GM12878 (cell line): ENCODE measurements at regions of chr7 and their contacts with region 1.

Region 1: DNA sequence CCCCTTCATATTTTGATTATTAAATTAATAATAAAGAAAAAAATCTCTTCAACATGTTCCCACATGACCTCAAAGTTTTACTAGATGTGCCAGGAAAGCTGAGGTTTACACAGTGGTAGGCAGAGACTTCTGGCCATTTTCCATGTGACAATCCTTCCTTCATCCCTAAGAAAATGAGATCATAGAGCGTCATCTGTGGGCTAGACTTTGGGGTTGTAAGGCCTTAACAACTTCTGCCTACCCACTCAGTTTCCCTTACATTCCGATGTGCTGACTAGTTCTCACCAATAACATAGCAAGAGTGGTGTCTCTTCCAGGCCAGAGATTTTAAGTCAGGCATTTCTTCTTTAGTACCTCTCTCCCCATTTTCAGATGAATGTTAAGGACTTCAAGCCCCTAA is 171.1 kb upstream of the PHF14 start:
- DNase-seq: no peak
- ATAC-seq: no peak
- H3K4me3 ChIP-seq: no peak overlapping the region
- H3K27ac ChIP-seq: no peak overlapping the region
- H3K4me1 ChIP-seq: no peaks in the 10 kb centered on the region
- H3K27me3 ChIP-seq: no peaks in the 10 kb centered on the region
- CTCF ChIP-seq: no peak
- EP300 ChIP-seq: no peak
- POLR2A ChIP-seq: no peak
- RAD21 ChIP-seq: no peak

Region 2: DNA sequence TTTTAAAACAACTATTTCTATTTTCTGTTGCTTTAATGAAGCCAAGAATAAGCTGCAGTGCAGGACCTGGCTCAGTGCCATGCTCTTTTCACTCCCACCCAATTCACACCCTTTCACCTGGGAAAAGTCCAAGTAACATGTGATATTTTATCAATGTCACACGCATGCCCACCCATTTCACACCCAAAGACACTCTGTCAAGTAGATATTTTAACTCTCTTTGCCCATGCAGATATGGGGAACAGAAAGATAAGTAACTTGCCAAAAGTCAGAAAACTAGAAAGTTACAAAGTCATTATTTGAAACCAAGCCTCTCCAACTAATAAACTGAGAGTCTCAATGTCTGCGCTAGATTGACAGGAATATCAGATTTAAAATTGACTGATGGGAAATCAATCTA is 535.5 kb before region 1 on chr7:
- CTCF ChIA-PET with region 1: no interaction called
- POLR2A ChIA-PET with region 1: no interaction called
- RAD21 ChIA-PET with region 1: no interaction called
- SMC1A ChIA-PET with region 1: no interaction called
- in situ Hi-C with region 1: loop called (anchors 10 kb)
- intact Hi-C with region 1: no loop called
- DNase-seq: no peak
- ATAC-seq: no peak
- H3K4me3 ChIP-seq: no peak overlapping the region
- H3K27ac ChIP-seq: no peak overlapping the region
- H3K4me1 ChIP-seq: no peaks in the 10 kb centered on the region
- H3K27me3 ChIP-seq: no peaks in the 10 kb centered on the region
- CTCF ChIP-seq: no peak
- EP300 ChIP-seq: no peak
- POLR2A ChIP-seq: no peak
- RAD21 ChIP-seq: no peak

Region 3: GRCh38 chr7:10779465-10780399 is 22.8 kb before region 1 on chr7:
- CTCF ChIA-PET with region 1: no interaction called
- POLR2A ChIA-PET with region 1: no interaction called
- RAD21 ChIA-PET with region 1: no interaction called
- SMC1A ChIA-PET with region 1: no interaction called
- in situ Hi-C with region 1: no loop called
- intact Hi-C with region 1: no loop called
- DNase-seq: no peak
- ATAC-seq: no peak
- H3K4me3 ChIP-seq: no peak overlapping the region
- H3K27ac ChIP-seq: no peak overlapping the region
- H3K4me1 ChIP-seq: no peaks in the 10 kb centered on the region
- H3K27me3 ChIP-seq: no peaks in the 10 kb centered on the region
- CTCF ChIP-seq: no peak
- EP300 ChIP-seq: no peak
- POLR2A ChIP-seq: no peak
- RAD21 ChIP-seq: no peak